Aorta (tissue), 5 donors: ENCODE measurements at regions of chr16 and their contacts with region 1.

Region 1: GRCh38 chr16:86575754-86576557 is 2.4 kb upstream of the FOXL1 start:
- DNase-seq: peak; percentile 94 to 96
- ATAC-seq: peak; percentile 83
- H3K4me3 ChIP-seq: peak overlapping the region; percentile 28 to 52
- H3K27ac ChIP-seq: peak overlapping the region; percentile 96 to 98
- H3K4me1 ChIP-seq: no peaks in the 10 kb centered on the region
- H3K27me3 ChIP-seq: no peaks in the 10 kb centered on the region

Region 2: DNA sequence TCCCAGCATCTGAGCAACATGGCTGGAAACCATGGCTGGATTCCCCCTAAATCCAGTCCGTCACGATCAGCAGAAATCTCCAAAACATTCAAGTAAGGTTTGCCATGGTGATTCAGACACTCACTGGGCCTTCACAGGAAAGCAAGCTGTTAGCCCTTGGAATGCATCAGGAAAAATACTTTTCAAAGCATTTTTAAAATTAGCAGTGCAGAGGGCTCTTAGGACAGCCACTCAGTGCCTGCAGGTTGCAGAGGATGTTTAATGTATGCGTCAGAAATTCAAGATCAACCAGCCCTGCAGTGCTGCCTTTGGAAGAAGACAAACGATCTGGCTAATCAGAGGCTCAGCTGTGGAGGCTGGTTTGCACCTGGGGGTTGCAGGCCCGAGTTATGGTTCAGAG is 52.7 kb after region 1 on chr16:
- intact Hi-C with region 1: no loop called
- DNase-seq: no peak
- ATAC-seq: no peak
- H3K4me3 ChIP-seq: no peak overlapping the region
- H3K27ac ChIP-seq: no peak overlapping the region
- H3K4me1 ChIP-seq: no peaks in the 10 kb centered on the region
- H3K27me3 ChIP-seq: no peaks in the 10 kb centered on the region

Region 3: GRCh38 chr16:86664533-86665318 is 88.8 kb after region 1 on chr16:
- intact Hi-C with region 1: loop called (anchors 5 kb)
- DNase-seq: peak in 1 of 2 donors; percentile 64
- ATAC-seq: peak; percentile 27
- H3K4me3 ChIP-seq: no peak overlapping the region
- H3K27ac ChIP-seq: peak overlapping the region in 1 of 2 donors; percentile 15
- H3K4me1 ChIP-seq: no peaks in the 10 kb centered on the region
- H3K27me3 ChIP-seq: no peaks in the 10 kb centered on the region

Region 4: GRCh38 chr16:86751076-86752030 is 175.4 kb after region 1 on chr16:
- intact Hi-C with region 1: loop called (anchors 5 kb)
- DNase-seq: peak in 1 of 2 donors; percentile 55
- ATAC-seq: peak; percentile 81
- H3K4me3 ChIP-seq: no peak overlapping the region
- H3K27ac ChIP-seq: peak overlapping the region; percentile 89 to 97
- H3K4me1 ChIP-seq: peaks cover 0 to 2% of the 10 kb centered on the region in 2 donors
- H3K27me3 ChIP-seq: no peaks in the 10 kb centered on the region

Region 5: GRCh38 chr16:86931399-86931941 is 355.5 kb after region 1 on chr16:
- intact Hi-C with region 1: loop called (anchors 1 to 10 kb)
- DNase-seq: peak; percentile 85 to 93
- ATAC-seq: peak; percentile 49
- H3K4me3 ChIP-seq: no peak overlapping the region
- H3K27ac ChIP-seq: peak overlapping the region in 1 of 2 donors; percentile 7
- H3K4me1 ChIP-seq: no peaks in the 10 kb centered on the region
- H3K27me3 ChIP-seq: no peaks in the 10 kb centered on the region

Region 6: DNA sequence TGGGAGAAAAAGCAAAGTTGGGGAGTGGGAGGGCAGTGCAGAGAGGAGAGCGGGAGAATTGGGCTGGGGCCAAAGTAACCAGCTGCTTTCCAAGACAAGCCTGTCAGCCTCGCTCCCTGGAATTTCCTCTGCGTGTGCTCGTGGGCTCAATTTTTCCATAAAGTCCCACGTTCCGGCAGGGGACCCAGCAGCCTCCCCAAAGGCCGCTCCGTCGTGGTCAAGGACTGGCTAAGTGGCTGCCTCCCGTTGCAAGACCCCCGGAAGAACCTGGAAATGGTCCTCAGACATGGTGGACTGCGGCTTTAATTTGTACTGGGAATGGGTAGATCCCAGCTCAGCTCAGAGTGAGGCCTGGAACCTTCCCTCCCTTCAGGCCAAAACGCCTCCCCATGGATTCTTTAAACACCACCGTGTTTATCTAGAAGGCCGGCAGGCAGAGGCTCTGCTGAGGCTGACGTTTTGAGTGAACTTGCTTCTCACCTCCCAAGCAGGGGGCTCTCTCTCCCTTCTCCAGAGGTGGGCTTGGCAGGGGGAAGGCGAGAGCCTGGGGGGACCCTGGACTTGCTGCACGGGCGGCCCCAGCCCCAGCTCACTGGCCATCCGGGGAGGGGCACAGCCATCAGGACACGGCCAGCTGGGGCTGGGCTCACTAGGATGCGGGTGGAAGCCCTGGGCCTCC is 551.2 kb after region 1 on chr16:
- intact Hi-C with region 1: loop called in 1 of 2 experiments (anchors 5 kb)
- DNase-seq: peak; percentile 76 to 87
- ATAC-seq: peak; percentile 56
- H3K4me3 ChIP-seq: no peak overlapping the region
- H3K27ac ChIP-seq: peak overlapping the region; percentile 41 to 100
- H3K4me1 ChIP-seq: no peaks in the 10 kb centered on the region
- H3K27me3 ChIP-seq: no peaks in the 10 kb centered on the region